Activated naive CD4-positive, alpha-beta T cell treated with anti-CD3 and anti-CD28 coated beads for 36 hours (primary cell): ENCODE measurements at regions of chr4 and their contacts with region 1.

Region 1: GRCh38 chr4:74311696-74312313 is 3.5 kb downstream of the EPGN start:
- DNase-seq: peak; percentile 41
- H3K4me3 Mint-ChIP-seq: no peak overlapping the region
- H3K27ac Mint-ChIP-seq: no peak overlapping the region
- H3K4me1 Mint-ChIP-seq: peaks cover 14% of the 10 kb centered on the region
- H3K27me3 Mint-ChIP-seq: no peaks in the 10 kb centered on the region

Region 2: DNA sequence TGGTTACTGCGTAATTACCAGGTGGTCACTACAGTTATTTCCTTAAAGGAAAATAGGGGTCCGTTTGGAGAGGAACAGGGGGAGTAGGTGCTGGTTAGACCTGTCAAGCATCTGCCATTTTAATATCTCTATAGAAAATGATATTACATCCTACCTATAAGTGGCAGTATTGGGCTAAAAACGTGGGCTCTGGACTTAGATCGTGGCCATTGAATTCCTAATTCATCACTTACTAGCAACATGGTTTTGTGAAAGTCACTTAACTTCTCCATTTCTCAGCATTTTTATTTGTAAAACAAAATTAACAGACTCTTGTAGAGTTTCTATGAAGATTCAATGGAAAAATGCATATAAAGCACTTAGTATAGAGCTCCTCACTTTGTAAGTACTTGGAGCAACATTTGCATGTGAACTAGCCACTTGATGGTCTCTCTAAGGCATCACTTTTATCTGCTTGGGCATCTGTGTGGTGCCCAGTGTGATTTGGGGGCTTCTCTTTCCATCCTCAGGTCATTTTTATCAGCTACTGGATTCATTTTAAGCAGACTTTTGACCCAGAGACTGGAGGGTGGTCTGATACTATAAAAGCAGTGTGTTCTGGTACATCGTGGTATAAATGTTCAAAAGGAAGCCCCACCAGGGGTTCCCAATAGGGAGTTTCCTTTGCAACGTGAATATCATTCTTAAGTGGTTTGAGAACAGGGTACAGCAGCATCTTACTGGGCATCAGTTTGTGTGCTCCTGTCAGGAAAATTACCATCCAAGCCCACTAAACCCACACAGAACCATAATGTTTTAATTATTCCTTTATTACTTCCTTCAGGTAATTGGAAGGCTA is 648.9 kb before region 1 on chr4:
- CTCF ChIA-PET with region 1: no interaction called
- intact Hi-C with region 1: loop called (anchors 5 kb)
- DNase-seq: no peak
- H3K4me3 Mint-ChIP-seq: no peak overlapping the region
- H3K27ac Mint-ChIP-seq: no peak overlapping the region
- H3K4me1 Mint-ChIP-seq: no peaks in the 10 kb centered on the region
- H3K27me3 Mint-ChIP-seq: no peaks in the 10 kb centered on the region

Region 3: GRCh38 chr4:74189331-74190043 is 122.3 kb before region 1 on chr4:
- CTCF ChIA-PET with region 1: interaction called, 7 read pairs
- intact Hi-C with region 1: loop called (anchors 1 kb)
- DNase-seq: no peak
- H3K4me3 Mint-ChIP-seq: no peak overlapping the region
- H3K27ac Mint-ChIP-seq: no peak overlapping the region
- H3K4me1 Mint-ChIP-seq: no peaks in the 10 kb centered on the region
- H3K27me3 Mint-ChIP-seq: no peaks in the 10 kb centered on the region

Region 4: DNA sequence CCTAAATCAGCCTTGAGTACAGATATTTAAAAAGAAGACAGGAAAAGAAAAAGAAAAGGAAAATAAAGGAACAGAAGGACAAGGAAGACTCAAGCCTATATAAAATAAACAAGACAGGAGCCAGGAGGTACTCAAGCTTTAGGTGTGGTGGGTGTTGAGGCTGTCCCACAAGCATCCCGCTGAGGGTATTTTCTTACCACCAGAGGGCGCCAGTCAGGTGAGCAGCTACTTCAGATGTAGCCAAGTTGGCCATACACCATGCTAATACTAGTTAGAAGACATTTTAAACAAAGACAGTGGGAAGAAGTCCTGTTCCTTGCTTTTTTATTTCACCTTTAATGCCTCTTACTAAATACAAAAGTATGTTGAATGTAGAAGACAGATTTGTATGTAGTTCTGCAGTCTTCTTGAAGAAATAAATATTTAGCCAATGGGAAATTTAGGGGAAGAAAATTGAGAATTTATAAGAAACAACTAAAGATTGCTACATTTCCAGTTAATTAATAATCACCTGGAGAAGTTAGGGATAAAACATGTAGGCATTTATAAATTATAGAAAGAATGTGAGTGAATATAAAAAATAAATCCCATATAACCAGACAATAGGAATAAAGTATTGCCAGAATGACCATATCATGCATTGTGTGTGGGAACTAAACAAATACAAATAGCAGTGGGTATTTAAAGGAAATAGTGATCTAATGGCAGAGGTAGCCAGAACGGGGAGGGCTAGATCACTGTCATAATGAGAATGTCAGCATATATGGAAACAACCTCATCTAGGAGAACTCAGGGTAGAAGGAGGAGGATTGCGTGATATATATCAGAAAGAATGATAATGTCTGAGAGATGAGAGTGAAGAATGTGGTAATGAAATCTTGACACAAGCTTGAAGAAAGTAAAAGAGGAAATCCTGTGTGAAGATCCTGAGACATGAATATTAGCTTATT is 82.8 kb before region 1 on chr4:
- CTCF ChIA-PET with region 1: interaction called, 33 read pairs
- intact Hi-C with region 1: loop called (anchors 1 kb)
- DNase-seq: peak; percentile 88
- H3K4me3 Mint-ChIP-seq: no peak overlapping the region
- H3K27ac Mint-ChIP-seq: no peak overlapping the region
- H3K4me1 Mint-ChIP-seq: peaks cover 3% of the 10 kb centered on the region
- H3K27me3 Mint-ChIP-seq: no peaks in the 10 kb centered on the region

Region 5: DNA sequence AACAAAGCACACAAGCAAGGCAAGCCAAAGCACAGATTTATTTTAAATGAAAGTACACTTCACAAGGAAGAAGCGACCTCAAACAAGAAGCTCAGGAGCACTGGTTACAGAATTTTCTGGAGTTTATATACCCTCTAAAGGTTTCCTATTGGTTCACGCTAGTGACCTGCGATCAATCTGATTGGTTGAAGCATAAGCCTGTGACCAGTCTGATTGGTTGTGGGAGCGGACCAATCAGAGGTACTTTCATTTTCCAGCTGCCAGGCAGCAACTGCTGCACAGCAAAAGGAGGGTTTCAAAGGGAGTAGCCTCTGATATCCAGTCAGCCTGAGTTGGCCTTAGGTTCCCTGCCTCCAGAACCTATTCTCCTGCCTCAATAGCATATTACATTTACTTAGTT is 128.6 kb after region 1 on chr4:
- CTCF ChIA-PET with region 1: no interaction called
- intact Hi-C with region 1: no loop called
- DNase-seq: no peak
- H3K4me3 Mint-ChIP-seq: no peak overlapping the region
- H3K27ac Mint-ChIP-seq: no peak overlapping the region
- H3K4me1 Mint-ChIP-seq: peaks cover 2% of the 10 kb centered on the region
- H3K27me3 Mint-ChIP-seq: peaks cover 4% of the 10 kb centered on the region